IMR-90 (cell line): ENCODE measurements at regions of chr6 and their contacts with region 1.

Region 1: DNA sequence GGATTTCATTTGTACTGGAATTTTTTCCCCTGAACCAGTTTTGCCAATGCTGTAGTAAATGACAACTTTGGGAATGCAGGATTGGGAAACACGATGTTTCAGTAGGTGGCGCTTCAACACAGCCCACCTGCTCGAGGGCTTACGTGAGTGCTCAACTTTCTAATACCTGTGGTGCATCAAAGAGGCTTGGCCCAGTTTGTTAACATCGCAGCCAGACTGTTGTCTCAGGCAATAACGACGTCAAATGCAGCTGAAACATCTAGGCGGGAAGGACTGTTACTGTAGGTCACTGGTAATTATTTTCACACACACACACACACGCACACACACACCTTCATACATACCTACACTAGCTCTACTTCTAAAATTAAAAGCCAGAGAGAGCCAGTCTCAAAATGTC is 815.5 kb upstream of the SLC35B3 start:
- DNase-seq: peak; percentile 53
- ATAC-seq: peak; percentile 59
- H3K4me3 ChIP-seq: no peak overlapping the region
- H3K27ac ChIP-seq: no peak overlapping the region
- H3K4me1 ChIP-seq: no peaks in the 10 kb centered on the region
- H3K27me3 ChIP-seq: no peaks in the 10 kb centered on the region
- CTCF ChIP-seq: peak; percentile 55
- POLR2A ChIP-seq: no peak
- RAD21 ChIP-seq: peak; percentile 80

Region 2: DNA sequence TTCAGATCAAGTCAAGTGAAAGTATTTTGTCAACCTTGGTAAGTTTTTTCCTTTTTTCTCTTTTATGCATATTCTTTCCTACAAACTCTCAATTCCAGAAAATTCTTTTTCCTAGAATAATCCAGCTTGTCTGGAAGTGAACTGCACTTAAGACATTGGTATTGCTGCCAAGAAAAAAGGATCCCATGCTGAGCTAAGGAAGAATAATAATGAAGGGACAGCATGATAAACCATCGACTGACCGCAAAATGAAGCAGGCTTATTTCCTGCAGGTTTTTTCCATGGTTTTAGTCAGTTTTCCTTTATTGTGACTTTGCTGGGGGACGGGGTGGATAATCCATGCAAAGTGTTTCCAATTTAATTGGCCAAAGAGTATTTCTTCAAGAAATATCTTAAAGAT is 42.1 kb after region 1 on chr6:
- CTCF ChIA-PET with region 1: no interaction called
- POLR2A ChIA-PET with region 1: no interaction called
- dilution Hi-C with region 1: no loop called
- in situ Hi-C with region 1: no loop called
- intact Hi-C with region 1: loop called (anchors 1 kb)
- DNase-seq: peak; percentile 16
- ATAC-seq: no peak
- H3K4me3 ChIP-seq: no peak overlapping the region
- H3K27ac ChIP-seq: no peak overlapping the region
- H3K4me1 ChIP-seq: no peaks in the 10 kb centered on the region
- H3K27me3 ChIP-seq: no peaks in the 10 kb centered on the region
- CTCF ChIP-seq: no peak
- POLR2A ChIP-seq: no peak
- RAD21 ChIP-seq: no peak

Region 3: DNA sequence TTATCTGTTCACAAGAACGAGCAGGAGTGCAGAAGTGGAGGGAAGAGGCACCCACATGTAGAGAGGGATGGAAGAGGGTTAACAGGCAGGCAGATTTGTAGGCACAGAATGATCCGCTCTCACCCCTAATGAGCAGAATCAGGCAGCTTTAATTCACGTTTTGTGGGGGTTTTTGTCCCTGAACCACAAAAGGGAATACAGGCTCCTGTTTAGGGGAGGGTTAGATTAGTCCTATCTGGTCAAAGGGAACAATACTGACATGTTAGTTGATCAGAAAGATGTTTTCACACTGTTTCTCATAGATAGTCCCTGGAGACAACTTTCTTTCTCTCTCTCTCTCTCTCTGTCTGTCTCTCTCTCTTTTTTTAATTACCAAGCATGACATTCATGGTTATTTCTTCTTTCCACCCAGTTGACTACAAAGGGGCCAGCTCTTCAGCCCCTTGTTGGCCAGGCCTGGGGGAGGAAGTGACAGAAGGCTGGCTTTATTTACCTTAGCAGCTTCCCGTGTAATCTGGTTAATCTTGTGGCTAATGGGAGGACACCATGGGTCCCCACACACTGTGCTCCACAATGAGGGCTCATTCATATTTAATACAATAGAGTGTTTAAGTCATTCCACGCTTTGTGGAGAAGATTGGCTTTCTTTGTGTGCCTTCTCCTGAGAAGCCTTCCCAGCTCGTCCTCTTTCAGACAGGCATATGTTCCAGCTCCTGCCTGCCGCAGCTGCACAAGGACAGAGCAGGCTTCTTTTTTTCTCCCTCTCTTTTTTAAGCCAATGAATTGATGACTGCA is 205.2 kb after region 1 on chr6:
- CTCF ChIA-PET with region 1: no interaction called
- POLR2A ChIA-PET with region 1: no interaction called
- dilution Hi-C with region 1: no loop called
- in situ Hi-C with region 1: no loop called
- intact Hi-C with region 1: no loop called
- DNase-seq: no peak
- ATAC-seq: no peak
- H3K4me3 ChIP-seq: no peak overlapping the region
- H3K27ac ChIP-seq: no peak overlapping the region
- H3K4me1 ChIP-seq: 0 out of 2 replicates have a peak, but pooled peaks cover 2% of the 10 kb centered on the region
- H3K27me3 ChIP-seq: no peaks in the 10 kb centered on the region
- CTCF ChIP-seq: no peak
- POLR2A ChIP-seq: no peak
- RAD21 ChIP-seq: no peak

Region 4: DNA sequence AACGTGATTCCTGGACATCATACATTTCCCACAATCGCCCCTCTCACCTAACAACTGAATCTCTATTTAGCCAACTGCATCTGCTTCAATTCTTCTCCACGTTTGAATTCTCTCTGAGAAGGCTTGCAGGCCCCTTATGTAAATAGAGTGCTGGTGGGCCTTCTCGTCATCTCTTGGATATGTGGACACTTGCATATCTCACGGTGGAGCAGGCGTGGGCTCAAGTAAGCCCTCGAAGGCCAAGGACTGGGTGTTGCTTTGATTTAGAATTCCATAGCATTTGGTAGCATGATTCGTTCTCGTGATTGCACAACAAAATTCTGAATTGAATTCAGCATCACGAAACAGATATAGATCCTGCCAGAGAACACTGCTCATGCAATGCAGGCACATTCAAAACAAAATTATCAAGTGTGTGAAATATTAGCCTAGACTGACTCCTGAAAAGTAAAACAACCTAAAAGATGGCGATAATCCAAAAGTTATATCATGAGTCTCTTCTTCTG is 550.5 kb after region 1 on chr6:
- CTCF ChIA-PET with region 1: no interaction called
- POLR2A ChIA-PET with region 1: no interaction called
- dilution Hi-C with region 1: no loop called
- in situ Hi-C with region 1: no loop called
- intact Hi-C with region 1: loop called (anchors 10 kb)
- DNase-seq: peak; percentile 82
- ATAC-seq: peak; percentile 93
- H3K4me3 ChIP-seq: no peak overlapping the region
- H3K27ac ChIP-seq: peak overlapping the region; percentile 46; the same call in 1 of the 2 replicates
- H3K4me1 ChIP-seq: peaks cover 2% of the 10 kb centered on the region; the same call in 1 of the 2 replicates
- H3K27me3 ChIP-seq: no peaks in the 10 kb centered on the region
- CTCF ChIP-seq: no peak
- POLR2A ChIP-seq: no peak
- RAD21 ChIP-seq: no peak

Region 5: DNA sequence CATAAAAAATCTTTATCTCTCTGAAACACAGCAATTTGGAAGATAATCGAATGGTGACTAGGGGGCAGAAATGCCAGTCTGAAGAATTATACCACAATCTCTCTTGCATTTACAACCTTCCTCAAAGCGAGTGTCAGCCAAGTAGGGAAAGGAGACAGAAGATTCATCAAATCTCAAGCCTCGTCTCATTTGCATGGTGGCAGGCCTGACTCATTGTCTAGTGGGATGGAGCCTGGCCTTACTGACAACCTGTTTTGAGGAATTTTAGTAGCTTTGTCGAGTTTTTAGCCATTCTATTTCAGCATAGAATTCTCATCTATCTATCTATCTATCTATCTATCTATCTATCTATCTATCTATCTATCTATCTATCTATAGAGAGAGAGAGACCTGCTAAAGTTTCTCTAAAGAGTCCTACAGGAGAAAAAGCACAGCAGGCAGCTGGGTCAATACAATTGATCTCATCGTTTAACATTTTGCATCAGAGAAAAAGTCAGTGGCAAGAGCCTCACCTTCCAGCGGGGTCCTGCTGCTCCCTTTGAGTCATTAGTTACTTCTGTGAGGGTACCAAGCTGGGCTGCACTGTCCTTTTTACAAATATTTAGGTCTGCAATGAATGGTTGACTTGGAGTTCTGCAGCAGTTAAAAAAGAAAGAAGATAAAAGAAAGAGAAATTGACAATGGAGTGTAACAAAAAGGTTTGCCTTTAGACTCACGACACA is 591.3 kb after region 1 on chr6:
- CTCF ChIA-PET with region 1: interaction called, 10 read pairs
- POLR2A ChIA-PET with region 1: no interaction called
- dilution Hi-C with region 1: no loop called
- in situ Hi-C with region 1: no loop called
- intact Hi-C with region 1: no loop called
- DNase-seq: no peak
- ATAC-seq: no peak
- H3K4me3 ChIP-seq: no peak overlapping the region
- H3K27ac ChIP-seq: no peak overlapping the region
- H3K4me1 ChIP-seq: no peaks in the 10 kb centered on the region
- H3K27me3 ChIP-seq: no peaks in the 10 kb centered on the region
- CTCF ChIP-seq: no peak
- POLR2A ChIP-seq: no peak
- RAD21 ChIP-seq: no peak

Region 6: GRCh38 chr6:10429638-10430427 is 1179.0 kb after region 1 on chr6:
- CTCF ChIA-PET with region 1: interaction called, 3 read pairs
- POLR2A ChIA-PET with region 1: no interaction called
- dilution Hi-C with region 1: no loop called
- in situ Hi-C with region 1: no loop called
- intact Hi-C with region 1: loop called (anchors 2 kb)
- DNase-seq: peak; percentile 52
- ATAC-seq: peak; percentile 54; the same call in 1 of the 2 replicates
- H3K4me3 ChIP-seq: no peak overlapping the region
- H3K27ac ChIP-seq: no peak overlapping the region
- H3K4me1 ChIP-seq: no peaks in the 10 kb centered on the region
- H3K27me3 ChIP-seq: peaks cover 12% of the 10 kb centered on the region
- CTCF ChIP-seq: peak; percentile 58
- POLR2A ChIP-seq: no peak
- RAD21 ChIP-seq: peak; percentile 80